ENCODE measurements at regions of chr1 and their contacts with region 1.

Region 1: DNA sequence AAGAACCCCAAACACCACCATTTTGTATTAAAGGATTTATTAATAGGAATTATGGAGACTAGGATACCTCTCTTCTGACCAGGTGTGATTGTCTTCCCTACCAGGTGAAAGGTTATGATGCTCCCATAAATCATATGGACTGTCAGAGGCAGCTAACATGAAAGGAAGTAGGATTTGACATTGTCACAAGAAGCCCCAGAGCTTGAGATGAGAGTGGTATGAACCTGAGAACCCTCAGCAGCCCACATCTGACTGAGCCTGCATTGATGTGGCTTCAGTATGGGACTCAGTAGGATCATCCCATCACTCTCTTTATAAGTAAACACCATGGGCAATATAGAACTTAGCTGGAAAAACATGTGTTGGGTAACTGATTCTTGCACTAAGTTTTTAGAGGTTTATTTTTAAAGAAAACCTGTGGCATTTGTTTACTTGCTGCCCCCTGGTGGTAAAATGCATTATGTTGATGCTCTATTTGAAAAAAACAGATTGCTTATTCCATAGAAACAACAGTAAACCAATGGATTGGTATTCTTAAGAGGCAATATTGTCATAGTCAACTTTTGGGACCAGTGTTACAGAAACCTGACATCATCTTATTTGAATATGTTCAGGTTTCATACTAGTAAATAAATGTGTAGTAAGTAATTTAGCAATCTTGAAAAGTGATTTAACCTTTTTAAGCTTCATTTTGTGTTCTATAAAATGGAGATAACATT is 16.6 kb upstream of the CACYBP start:
- DNase-seq: peak in 2 of 5 donors; percentile 14 to 70
- H3K4me3 ChIP-seq: no peak overlapping the region
- H3K27ac ChIP-seq: no peak overlapping the region
- H3K4me1 ChIP-seq: no peaks in the 10 kb centered on the region
- H3K27me3 ChIP-seq: no peaks in the 10 kb centered on the region
- CTCF ChIP-seq: peak; percentile 47

Region 2: GRCh38 chr1:174626031-174627025 is 356.8 kb before region 1 on chr1:
- intact Hi-C with region 1: no loop called
- DNase-seq: peak in 1 of 5 donors; percentile 8
- H3K4me3 ChIP-seq: no peak overlapping the region
- H3K27ac ChIP-seq: no peak overlapping the region
- H3K4me1 ChIP-seq: no peaks in the 10 kb centered on the region
- H3K27me3 ChIP-seq: no peaks in the 10 kb centered on the region
- CTCF ChIP-seq: no peak

Region 3: DNA sequence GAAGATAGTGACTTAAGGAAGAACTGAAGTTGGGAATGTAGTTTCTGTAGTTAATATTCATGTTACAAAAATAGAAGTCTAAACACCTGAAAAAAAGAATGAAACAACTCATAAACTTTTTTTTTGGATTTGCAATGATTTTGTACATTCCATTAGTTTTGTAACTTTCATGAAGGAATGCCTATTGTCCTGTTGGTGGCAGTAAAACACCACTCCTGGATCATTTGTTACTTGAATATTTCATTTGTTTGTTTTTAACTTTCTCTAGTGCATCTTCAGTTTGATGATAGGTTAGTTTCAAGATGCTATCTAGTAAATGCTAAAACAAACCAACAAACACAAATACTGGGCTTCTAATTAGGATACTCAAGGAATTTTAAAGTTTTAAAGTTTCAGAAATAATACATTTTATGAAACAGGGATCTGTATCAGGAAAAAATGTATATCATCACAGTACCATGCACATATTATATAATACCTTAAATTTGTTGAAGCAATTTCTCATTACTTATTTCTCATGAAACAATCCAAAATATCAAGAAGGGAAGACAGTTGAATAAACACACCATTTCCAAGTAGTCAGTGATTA is 213.1 kb before region 1 on chr1:
- intact Hi-C with region 1: loop called (anchors 10 kb)
- DNase-seq: peak in 2 of 5 donors; percentile 78 to 89
- H3K4me3 ChIP-seq: no peak overlapping the region
- H3K27ac ChIP-seq: no peak overlapping the region
- H3K4me1 ChIP-seq: no peaks in the 10 kb centered on the region
- H3K27me3 ChIP-seq: no peaks in the 10 kb centered on the region
- CTCF ChIP-seq: peak; percentile 70

Region 4: DNA sequence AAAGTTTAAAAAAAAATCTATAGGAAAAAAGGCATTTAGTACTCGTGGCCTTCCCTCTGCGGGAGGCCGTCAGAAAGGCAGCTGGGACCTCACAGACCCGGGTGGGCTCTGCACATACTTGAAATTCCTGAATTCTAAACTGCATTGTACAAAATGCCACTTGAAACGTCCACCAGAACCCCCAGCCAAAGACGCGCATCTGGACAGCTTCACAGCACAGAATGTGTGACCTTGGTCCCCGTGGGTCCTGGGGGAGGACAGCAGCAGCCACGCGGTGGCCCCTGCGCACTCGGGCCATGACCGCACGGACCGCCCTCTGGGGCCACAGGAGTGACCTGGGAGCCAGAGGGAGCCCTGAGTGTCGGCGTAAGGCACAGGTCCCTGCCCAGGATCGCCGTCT is 60.7 kb after region 1 on chr1:
- intact Hi-C with region 1: no loop called
- DNase-seq: peak in 2 of 5 donors; percentile 31 to 53
- H3K4me3 ChIP-seq: no peak overlapping the region
- H3K27ac ChIP-seq: no peak overlapping the region
- H3K4me1 ChIP-seq: no peaks in the 10 kb centered on the region
- H3K27me3 ChIP-seq: no peaks in the 10 kb centered on the region
- CTCF ChIP-seq: no peak